Caco-2 (cell line): ENCODE measurements at regions of chr9 and their contacts with region 1.

Region 1: GRCh38 chr9:34085581-34086500 is 37.2 kb upstream of the UBAP2 start:
- DNase-seq: no peak
- H3K4me3 ChIP-seq: no peak overlapping the region
- H3K4me3 Mint-ChIP-seq: no peak overlapping the region
- H3K27ac Mint-ChIP-seq: no peak overlapping the region
- H3K4me1 ChIP-seq: no peaks in the 10 kb centered on the region
- H3K4me1 Mint-ChIP-seq: no peaks in the 10 kb centered on the region
- H3K27me3 ChIP-seq: no peaks in the 10 kb centered on the region
- H3K27me3 Mint-ChIP-seq: no peaks in the 10 kb centered on the region
- CTCF ChIP-seq: no peak

Region 2: DNA sequence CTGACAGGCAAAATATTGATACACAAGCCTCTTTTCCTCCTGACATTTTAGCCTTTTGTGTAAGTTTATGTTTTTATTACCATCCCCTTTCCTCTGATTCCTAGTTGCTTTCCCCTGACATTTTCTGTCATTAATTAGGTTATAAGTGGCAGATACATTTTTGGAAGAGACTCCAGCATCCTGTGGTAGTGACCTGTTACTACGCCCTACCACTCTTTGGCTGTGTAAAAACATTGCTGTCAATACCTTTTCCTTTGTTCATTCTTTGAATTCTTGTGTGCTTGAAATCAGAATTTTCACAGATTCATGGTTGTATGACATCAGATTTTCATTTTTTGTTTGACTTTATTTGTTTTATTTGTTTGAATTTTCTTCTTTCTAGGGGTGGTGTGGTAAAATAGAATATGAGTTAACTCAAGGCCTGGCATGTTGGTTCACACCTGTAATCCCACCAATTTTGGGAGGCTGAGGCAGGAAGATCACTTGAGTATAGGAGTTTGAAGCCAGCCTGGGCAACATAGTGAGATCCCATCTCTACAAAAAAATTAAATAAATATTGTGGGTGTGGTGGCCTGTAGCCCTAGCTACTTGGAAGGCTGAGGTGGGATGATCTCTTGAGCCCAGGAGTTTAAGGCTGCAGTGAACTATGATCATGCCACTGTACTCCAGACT is 225.5 kb before region 1 on chr9:
- CTCF ChIA-PET with region 1: no interaction called
- POLR2A ChIA-PET with region 1: no interaction called
- intact Hi-C with region 1: no loop called
- DNase-seq: no peak
- H3K4me3 ChIP-seq: no peak overlapping the region
- H3K4me3 Mint-ChIP-seq: no peak overlapping the region
- H3K27ac Mint-ChIP-seq: peak overlapping the region; percentile 64
- H3K4me1 ChIP-seq: 0 out of 2 replicates have a peak, but pooled peaks cover 3% of the 10 kb centered on the region
- H3K4me1 Mint-ChIP-seq: peaks cover 26% of the 10 kb centered on the region
- H3K27me3 ChIP-seq: no peaks in the 10 kb centered on the region
- H3K27me3 Mint-ChIP-seq: no peaks in the 10 kb centered on the region
- CTCF ChIP-seq: peak in 1 of 2 experiments; percentile 6

Region 3: DNA sequence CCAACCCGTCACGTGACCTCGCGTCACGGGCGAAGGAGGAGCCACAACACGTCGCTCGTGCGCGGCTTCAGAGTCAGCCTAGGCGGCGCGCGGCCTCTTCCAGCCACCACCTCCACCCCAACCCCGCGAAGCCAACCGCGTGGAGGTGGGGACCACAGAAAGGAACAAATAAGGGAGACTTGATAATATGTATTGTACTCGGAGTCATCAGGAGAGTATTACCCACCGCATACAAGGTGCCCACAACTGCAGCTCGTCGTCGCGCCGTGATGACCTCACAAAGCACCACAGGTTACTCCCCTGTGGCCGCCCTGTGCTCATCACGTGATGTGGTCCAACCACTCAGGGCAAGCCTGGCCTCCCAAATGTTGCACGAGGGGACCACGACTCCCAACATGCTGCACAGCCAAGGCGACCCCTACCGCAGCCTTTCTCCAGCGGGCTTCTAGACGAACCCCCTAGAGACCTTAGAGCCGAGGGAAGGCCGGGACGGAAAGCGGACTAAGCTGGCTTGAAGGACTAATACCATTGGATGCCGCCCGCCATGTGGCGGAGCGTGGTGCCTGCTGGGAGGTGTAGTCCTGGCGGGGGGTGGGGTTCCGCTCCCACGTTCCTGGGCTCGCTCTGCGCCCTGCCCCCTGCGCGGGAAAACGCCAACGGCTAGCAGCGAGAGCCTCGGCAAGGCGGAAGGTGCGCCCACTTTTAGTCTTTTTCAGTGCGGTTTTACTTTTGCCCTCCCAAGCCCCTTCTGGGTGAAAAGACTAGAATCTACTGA is 36.7 kb before region 1 on chr9:
- CTCF ChIA-PET with region 1: no interaction called
- POLR2A ChIA-PET with region 1: no interaction called
- intact Hi-C with region 1: no loop called
- DNase-seq: peak; percentile 96 to 99
- H3K4me3 ChIP-seq: peak overlapping the region; percentile 99
- H3K4me3 Mint-ChIP-seq: peak overlapping the region; percentile 100
- H3K27ac Mint-ChIP-seq: peak overlapping the region; percentile 100
- H3K4me1 ChIP-seq: peaks cover 18% of the 10 kb centered on the region
- H3K4me1 Mint-ChIP-seq: peaks cover 17% of the 10 kb centered on the region
- H3K27me3 ChIP-seq: no peaks in the 10 kb centered on the region
- H3K27me3 Mint-ChIP-seq: no peaks in the 10 kb centered on the region
- CTCF ChIP-seq: no peak

Region 4: DNA sequence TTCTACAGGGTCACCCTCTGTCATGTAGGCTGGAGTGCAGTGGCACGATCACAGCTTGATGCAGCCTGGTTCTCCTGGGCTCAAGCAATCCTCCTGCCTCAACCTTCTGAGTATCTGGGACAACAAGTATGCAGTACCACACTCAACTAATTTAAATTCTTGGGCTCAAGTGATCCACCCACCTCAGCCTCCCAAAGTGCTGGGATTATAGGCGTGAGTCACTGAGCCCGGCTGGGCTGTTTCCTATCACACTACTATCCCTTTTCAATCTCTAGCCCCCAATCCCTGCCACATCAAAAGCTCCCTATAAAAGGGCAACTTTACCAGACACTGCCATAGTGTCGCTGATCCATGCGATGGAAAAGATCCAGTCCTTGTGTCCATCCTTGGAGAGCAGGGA is 20.3 kb after region 1 on chr9:
- CTCF ChIA-PET with region 1: no interaction called
- POLR2A ChIA-PET with region 1: no interaction called
- intact Hi-C with region 1: loop called (anchors 1 kb)
- DNase-seq: no peak
- H3K4me3 ChIP-seq: no peak overlapping the region
- H3K4me3 Mint-ChIP-seq: no peak overlapping the region
- H3K27ac Mint-ChIP-seq: no peak overlapping the region
- H3K4me1 ChIP-seq: no peaks in the 10 kb centered on the region
- H3K4me1 Mint-ChIP-seq: no peaks in the 10 kb centered on the region
- H3K27me3 ChIP-seq: no peaks in the 10 kb centered on the region
- H3K27me3 Mint-ChIP-seq: no peaks in the 10 kb centered on the region
- CTCF ChIP-seq: no peak